ENCODE measurements at regions of chr1 and their contacts with region 1.

Region 1: DNA sequence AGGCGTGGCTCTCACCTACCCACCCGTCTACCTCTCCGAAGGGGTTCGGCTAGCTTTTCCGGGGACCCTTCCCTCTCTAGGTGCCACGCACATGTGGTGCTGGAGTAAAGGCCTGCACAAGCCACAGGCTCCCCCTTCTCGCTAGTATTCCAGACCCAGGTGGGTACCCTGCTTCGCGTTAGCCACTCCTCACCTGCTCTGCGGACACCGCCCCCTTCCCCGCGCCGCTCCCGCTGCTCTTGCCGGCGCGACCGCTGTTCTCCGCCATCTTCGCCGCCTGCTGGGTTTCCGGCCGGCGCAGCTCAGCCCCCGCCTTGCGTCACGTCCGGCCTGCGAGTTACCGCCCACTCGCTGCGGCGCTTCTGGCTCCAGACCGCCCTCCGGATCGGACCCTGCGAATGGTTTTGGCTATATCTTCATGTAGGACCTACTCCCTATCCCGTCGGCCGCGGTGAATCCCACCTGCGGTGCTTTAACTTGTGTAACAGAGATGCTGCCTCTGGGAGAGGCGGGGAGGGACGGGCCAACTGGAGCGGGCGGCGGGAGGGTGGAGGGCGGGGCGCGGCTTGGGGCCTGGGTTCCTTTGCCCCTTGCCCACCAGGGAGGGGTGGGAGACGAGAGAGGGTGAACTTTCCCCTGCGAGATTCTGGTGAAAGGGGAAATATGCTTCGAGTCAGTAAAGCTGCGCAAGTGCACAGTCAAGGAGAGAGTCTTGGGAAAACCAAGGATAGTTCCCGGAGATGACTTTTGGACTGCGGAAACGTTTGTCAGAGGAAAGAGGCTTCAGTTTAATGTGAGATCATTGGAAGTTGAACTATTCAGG is at the starts of genes NIT1 and PFDN2:
- DNase-seq: peak; percentile 84
- H3K4me3 Mint-ChIP-seq: peak within 1 kb of the TSS; percentile 97
- H3K27ac Mint-ChIP-seq: peak within 1 kb of the TSS; percentile 96
- H3K4me1 Mint-ChIP-seq: peaks cover 75% of the 10 kb centered on the region
- H3K27me3 Mint-ChIP-seq: no peaks in the 10 kb centered on the region
- total RNA-seq, gene NIT1: 51.3 and 56.3 TPM in 2 replicates
- total RNA-seq, gene PFDN2: 147 and 164 TPM in 2 replicates

Region 2: GRCh38 chr1:161021165-161021960 is 96.6 kb before region 1 on chr1:
- intact Hi-C with region 1: no loop called
- DNase-seq: peak; percentile 76
- H3K4me3 Mint-ChIP-seq: peak overlapping the region; percentile 91
- H3K27ac Mint-ChIP-seq: peak overlapping the region; percentile 78
- H3K4me1 Mint-ChIP-seq: peaks cover 35% of the 10 kb centered on the region
- H3K27me3 Mint-ChIP-seq: peaks cover 2% of the 10 kb centered on the region

Region 3: DNA sequence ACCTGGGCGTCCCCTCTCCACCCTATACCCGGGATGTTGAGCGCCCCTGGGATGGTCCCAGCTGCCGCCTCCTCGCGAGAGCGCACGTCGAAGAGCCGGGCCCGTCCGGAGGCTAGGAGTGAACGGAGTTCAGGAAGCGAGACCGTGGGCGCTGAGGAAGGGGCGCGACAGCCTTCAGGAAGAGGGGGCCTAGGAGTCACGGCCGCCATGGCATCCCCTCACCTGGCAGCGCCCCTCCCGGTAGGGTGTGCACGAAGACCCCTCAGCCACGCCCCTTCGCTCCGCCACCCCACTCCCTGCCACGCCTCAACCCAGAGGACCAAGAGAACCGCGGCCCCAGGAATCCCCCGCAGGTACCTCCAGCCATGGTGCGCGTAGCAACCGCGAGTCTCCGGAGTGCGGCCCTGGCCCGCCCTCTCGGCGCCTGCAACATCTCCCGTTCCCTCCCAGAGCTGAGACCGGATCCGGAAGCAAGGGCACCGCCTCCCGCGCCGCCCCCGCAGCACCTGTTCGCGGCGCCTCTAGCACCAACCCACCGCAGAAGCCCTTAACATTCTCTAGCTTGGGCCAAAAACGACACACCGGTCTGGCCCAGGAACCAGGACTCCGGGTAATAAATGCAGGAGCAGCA is 79.3 kb before region 1 on chr1 and contains the start of gene TSTD1:
- intact Hi-C with region 1: loop called (anchors 2 kb)
- DNase-seq: peak; percentile 83
- H3K4me3 Mint-ChIP-seq: peak within 1 kb of the TSS; percentile 89
- H3K27ac Mint-ChIP-seq: peak within 1 kb of the TSS; percentile 93
- H3K4me1 Mint-ChIP-seq: peaks cover 42% of the 10 kb centered on the region
- H3K27me3 Mint-ChIP-seq: no peaks in the 10 kb centered on the region
- total RNA-seq, gene TSTD1: 40.5 and 43.3 TPM in 2 replicates

Region 4: GRCh38 chr1:161071886-161072371 is 46.0 kb before region 1 on chr1:
- intact Hi-C with region 1: loop called (anchors 1 kb)
- DNase-seq: peak; percentile 24
- H3K4me3 Mint-ChIP-seq: no peak overlapping the region
- H3K27ac Mint-ChIP-seq: peak overlapping the region; percentile 47
- H3K4me1 Mint-ChIP-seq: peaks cover 49% of the 10 kb centered on the region
- H3K27me3 Mint-ChIP-seq: no peaks in the 10 kb centered on the region

Region 5: GRCh38 chr1:161153679-161154426 is 35.9 kb after region 1 on chr1 and contains the start of gene UFC1:
- intact Hi-C with region 1: loop called (anchors 1 kb)
- DNase-seq: peak; percentile 80
- H3K4me3 Mint-ChIP-seq: peak within 1 kb of the TSS; percentile 99
- H3K27ac Mint-ChIP-seq: peak within 1 kb of the TSS; percentile 100
- H3K4me1 Mint-ChIP-seq: peaks cover 33% of the 10 kb centered on the region
- H3K27me3 Mint-ChIP-seq: no peaks in the 10 kb centered on the region
- total RNA-seq, gene UFC1: 86.3 and 94.5 TPM in 2 replicates

Region 6: DNA sequence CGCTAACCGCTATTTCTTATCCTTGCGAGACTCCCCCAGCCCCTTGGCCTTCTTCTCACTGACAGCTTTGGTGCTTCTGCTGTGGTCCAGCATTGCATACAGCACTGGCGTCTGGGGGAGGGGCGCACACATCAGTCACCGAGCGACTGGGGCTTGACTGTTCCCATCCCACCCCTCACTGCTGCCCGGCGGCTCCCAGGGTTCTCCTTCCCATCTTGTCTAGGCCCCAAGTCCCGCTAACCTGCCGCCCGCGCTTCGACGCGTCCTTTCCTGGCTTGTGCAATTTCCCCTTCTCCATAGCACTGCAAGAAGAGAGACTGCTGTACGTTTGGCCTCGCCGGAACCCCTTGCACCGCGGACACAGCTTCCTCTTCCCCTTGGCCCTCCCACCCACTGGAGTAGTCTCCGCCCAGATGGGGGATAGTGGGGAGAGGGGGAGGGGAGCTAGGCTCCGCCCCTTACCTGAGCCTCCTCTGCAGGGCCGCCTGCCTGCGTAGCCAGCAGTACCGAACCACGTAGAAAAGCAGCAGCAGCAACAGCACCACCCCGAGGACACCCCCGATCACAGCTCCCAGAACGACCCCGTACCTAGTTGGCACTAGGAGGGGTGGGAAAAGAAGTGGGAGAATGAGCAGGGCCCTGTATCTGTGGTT is 188.0 kb after region 1 on chr1:
- intact Hi-C with region 1: no loop called
- DNase-seq: peak; percentile 82
- H3K4me3 Mint-ChIP-seq: peak overlapping the region; percentile 99
- H3K27ac Mint-ChIP-seq: peak overlapping the region; percentile 94
- H3K4me1 Mint-ChIP-seq: peaks cover 52% of the 10 kb centered on the region
- H3K27me3 Mint-ChIP-seq: no peaks in the 10 kb centered on the region

Region 7: GRCh38 chr1:161399257-161399998 is 281.5 kb after region 1 on chr1:
- intact Hi-C with region 1: loop called (anchors 5 kb)
- DNase-seq: peak; percentile 88
- H3K4me3 Mint-ChIP-seq: peak overlapping the region; percentile 94
- H3K27ac Mint-ChIP-seq: peak overlapping the region; percentile 100
- H3K4me1 Mint-ChIP-seq: peaks cover 50% of the 10 kb centered on the region
- H3K27me3 Mint-ChIP-seq: peaks cover 13% of the 10 kb centered on the region